IMR-90 (cell line): ENCODE measurements at regions of chrX and their contacts with region 1.

Region 1: DNA sequence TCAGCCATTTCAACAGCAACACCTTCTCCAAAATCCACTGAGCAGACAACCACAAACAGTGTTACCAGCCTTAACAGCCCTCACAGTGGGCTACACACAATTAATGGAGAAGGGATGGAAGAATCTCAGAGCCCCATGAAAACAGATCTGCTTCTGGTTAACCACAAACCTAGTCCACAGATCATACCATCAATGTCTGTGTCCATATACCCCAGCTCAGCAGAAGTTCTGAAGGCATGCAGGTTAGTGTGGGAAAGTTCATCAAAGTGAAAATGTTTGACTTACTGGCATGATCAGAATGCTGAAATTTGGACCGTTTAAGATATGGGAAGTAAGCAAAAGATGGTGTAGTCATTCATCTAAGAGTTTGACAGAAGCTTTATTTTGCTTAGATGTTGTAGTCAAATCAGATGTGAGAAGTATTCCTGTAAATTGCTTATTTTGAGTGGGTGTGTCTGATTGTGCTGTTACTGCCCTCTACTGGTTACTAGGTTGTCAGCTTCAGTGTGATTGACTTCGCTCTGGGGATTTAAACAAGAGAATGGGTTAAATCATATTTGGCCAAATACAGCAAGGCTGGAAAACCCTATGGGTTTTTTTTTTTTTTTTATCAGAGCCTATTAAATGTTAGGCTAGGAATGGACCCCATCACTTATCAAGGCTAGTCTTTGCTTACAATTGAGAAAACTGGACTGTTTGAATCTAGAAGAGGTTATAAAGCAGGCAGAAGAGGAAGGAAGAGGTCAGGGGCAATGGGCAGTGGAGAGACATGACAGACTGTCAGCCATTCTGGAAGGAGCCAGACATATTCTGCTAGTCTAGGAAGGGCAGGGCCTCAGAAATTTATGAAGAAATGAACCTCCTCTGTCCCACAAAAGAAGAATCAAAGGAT is 130.3 kb downstream of the DIPK2B start:
- DNase-seq: peak; percentile 67
- ATAC-seq: peak; percentile 78
- H3K4me3 ChIP-seq: no peak overlapping the region
- H3K27ac ChIP-seq: no peak overlapping the region
- H3K4me1 ChIP-seq: no peaks in the 10 kb centered on the region
- H3K27me3 ChIP-seq: no peaks in the 10 kb centered on the region
- CTCF ChIP-seq: peak; percentile 67
- POLR2A ChIP-seq: no peak
- RAD21 ChIP-seq: peak; percentile 67

Region 2: DNA sequence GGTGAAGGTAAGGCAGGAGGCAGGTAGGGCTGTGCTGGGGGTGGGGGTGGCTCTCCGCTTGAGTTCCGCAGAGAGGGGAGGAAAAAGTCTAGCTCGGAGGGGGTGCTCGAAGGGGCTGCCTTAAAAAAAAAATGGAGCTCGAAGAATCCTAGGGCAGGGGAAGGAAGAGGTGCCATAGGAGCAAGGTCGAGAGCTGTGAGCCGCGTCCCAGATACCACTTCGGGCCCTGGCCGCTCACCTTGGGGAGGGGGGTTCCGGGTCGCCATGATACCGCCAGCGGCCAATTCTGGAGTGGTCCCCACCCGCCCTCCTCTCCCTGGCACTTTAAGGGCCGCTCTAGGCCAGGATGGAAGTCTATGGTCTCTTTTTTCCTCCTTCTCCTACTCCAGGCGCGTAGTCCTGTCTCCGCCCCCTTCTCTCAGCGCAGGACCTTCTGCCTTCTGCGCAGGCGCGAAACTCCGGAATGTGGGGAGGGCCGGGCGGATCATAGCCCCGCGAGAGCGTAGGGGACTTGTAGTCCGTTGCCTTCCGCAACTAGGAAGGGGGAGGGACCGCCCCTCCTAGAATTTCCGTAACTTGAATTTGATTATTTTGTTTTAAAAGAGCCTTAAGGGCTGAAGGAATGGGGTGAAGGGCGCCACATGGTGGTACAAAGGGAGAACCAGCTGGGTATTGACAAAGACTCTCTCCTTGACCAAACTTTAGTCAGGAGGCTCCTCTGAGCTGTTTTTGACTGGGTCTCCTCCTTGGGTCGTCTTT is 527.6 kb before region 1 on chrX and contains the start of gene FUNDC1:
- CTCF ChIA-PET with region 1: no interaction called
- POLR2A ChIA-PET with region 1: no interaction called
- dilution Hi-C with region 1: no loop called
- in situ Hi-C with region 1: no loop called
- intact Hi-C with region 1: loop called (anchors 10 kb)
- DNase-seq: peak; percentile 91
- ATAC-seq: peak; percentile 99
- H3K4me3 ChIP-seq: peak within 1 kb of the TSS; percentile 81
- H3K27ac ChIP-seq: peak within 1 kb of the TSS; percentile 85
- H3K4me1 ChIP-seq: no peaks in the 10 kb centered on the region
- H3K27me3 ChIP-seq: no peaks in the 10 kb centered on the region
- CTCF ChIP-seq: peak; percentile 40; the same call in 1 of the 2 replicates
- POLR2A ChIP-seq: peak; percentile 43; the same call in 1 of the 2 replicates
- RAD21 ChIP-seq: peak; percentile 27; the same call in 1 of the 2 replicates
- total RNA-seq, gene FUNDC1: 8.6 and 13.6 TPM in 2 replicates

Region 3: DNA sequence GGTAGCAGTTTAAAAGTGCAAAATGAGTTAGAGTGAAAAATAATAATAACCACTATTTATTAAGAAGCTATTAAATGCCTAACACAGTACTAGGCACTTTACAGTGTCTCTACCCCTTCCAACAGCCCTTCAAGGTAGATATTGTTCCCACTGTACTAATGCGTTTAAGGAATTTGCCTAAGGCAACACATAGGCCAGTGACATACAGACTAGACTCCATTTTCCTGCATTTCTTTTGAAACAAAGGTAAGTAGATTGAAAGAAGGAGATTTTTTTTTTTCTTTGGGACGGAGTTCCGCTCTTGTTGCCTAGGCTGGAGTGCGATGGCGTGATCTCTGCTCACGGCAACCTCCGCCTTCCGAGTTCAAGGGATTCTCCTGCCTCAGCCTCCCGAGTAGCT is 222.1 kb before region 1 on chrX:
- CTCF ChIA-PET with region 1: no interaction called
- POLR2A ChIA-PET with region 1: no interaction called
- dilution Hi-C with region 1: no loop called
- in situ Hi-C with region 1: loop called (anchors 10 kb)
- intact Hi-C with region 1: no loop called
- DNase-seq: no peak
- ATAC-seq: no peak
- H3K4me3 ChIP-seq: no peak overlapping the region
- H3K27ac ChIP-seq: no peak overlapping the region
- H3K4me1 ChIP-seq: no peaks in the 10 kb centered on the region
- H3K27me3 ChIP-seq: no peaks in the 10 kb centered on the region; the same call in none of the 2 replicates
- CTCF ChIP-seq: no peak
- POLR2A ChIP-seq: no peak
- RAD21 ChIP-seq: no peak

Region 4: GRCh38 chrX:44872817-44873414 is 197.4 kb before region 1 on chrX and contains the start of gene KDM6A:
- CTCF ChIA-PET with region 1: interaction called, 4 read pairs
- POLR2A ChIA-PET with region 1: interaction called, 3 read pairs
- dilution Hi-C with region 1: no loop called
- in situ Hi-C with region 1: no loop called
- intact Hi-C with region 1: loop called (anchors 1 kb)
- DNase-seq: peak; percentile 96
- ATAC-seq: peak; percentile 90
- H3K4me3 ChIP-seq: peak within 1 kb of the TSS; percentile 93
- H3K27ac ChIP-seq: peak within 1 kb of the TSS; percentile 89
- H3K4me1 ChIP-seq: no peaks in the 10 kb centered on the region
- H3K27me3 ChIP-seq: no peaks in the 10 kb centered on the region
- CTCF ChIP-seq: no peak
- POLR2A ChIP-seq: peak; percentile 69
- RAD21 ChIP-seq: no peak
- total RNA-seq, gene KDM6A: 24.9 and 25.3 TPM in 2 replicates

Region 5: DNA sequence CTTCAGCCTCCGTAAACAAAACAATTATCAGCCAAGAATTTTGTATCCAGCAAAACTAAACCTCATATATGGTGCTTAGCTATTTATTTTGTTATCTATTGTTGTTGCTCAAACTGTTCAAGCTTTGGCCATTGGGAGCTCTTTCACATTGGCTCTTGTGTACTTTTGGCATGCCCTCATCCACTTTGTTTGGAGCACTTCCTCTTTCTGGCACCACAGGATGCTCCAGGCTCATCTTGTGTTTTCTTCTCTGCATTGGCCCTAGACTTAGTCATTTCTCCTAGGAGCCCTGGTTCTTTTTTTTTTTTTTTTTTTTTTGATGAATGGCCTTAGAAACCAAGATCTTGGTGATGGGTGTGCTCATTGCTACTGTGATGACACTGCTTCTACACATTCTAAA is 55.8 kb after region 1 on chrX:
- CTCF ChIA-PET with region 1: no interaction called
- POLR2A ChIA-PET with region 1: no interaction called
- dilution Hi-C with region 1: no loop called
- in situ Hi-C with region 1: loop called (anchors 10 kb)
- intact Hi-C with region 1: no loop called
- DNase-seq: no peak
- ATAC-seq: no peak
- H3K4me3 ChIP-seq: no peak overlapping the region
- H3K27ac ChIP-seq: no peak overlapping the region
- H3K4me1 ChIP-seq: no peaks in the 10 kb centered on the region
- H3K27me3 ChIP-seq: peaks cover 3% of the 10 kb centered on the region
- CTCF ChIP-seq: no peak
- POLR2A ChIP-seq: no peak
- RAD21 ChIP-seq: no peak

Region 6: DNA sequence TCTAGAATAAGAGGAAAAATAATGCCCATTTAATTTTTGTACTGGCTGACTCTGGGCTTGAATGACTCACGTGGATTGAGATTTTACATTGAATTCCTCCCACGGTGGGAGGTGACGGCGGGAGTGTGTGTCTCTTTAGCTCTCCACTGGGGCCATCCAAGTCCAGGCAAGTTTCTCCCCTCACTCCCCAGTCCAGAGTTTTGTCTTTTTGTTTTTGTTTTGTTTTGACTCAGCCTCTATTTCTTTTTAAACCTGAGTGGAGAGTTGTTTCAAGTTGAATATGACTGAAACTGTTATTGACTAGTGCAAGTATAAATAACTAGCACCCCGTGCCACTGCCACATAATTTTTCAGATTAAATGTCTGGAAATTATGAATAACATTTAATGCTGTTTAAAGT is 1516.8 kb after region 1 on chrX:
- CTCF ChIA-PET with region 1: no interaction called
- POLR2A ChIA-PET with region 1: no interaction called
- dilution Hi-C with region 1: no loop called
- in situ Hi-C with region 1: no loop called
- intact Hi-C with region 1: no loop called
- DNase-seq: peak; percentile 66
- ATAC-seq: peak; percentile 35; the same call in 1 of the 2 replicates
- H3K4me3 ChIP-seq: no peak overlapping the region
- H3K27ac ChIP-seq: peak overlapping the region; percentile 34; the same call in 1 of the 2 replicates
- H3K4me1 ChIP-seq: peaks cover 12% of the 10 kb centered on the region
- H3K27me3 ChIP-seq: no peaks in the 10 kb centered on the region
- CTCF ChIP-seq: no peak
- POLR2A ChIP-seq: no peak
- RAD21 ChIP-seq: no peak